Naive thymus-derived CD4-positive, alpha-beta T cell (primary cell): ENCODE measurements at regions of chr9 and their contacts with region 1.

Region 1: GRCh38 chr9:112174218-112174964 is 706 bp downstream of the SUSD1 start:
- DNase-seq: peak; percentile 42 to 80 (median 63)
- ATAC-seq: peak; percentile 87
- H3K4me3 ChIP-seq: peak overlapping the region; percentile 67
- H3K4me3 Mint-ChIP-seq: peak overlapping the region; percentile 83 to 94 (median 90)
- H3K27ac ChIP-seq: peak overlapping the region; percentile 9
- H3K27ac Mint-ChIP-seq: peak overlapping the region; percentile 65 to 95 (median 87)
- H3K4me1 ChIP-seq: peaks cover 33 to 54% of the 10 kb centered on the region in 2 donors
- H3K4me1 Mint-ChIP-seq: peaks cover 49 to 81% (median 73%) of the 10 kb centered on the region in 7 donors
- H3K27me3 ChIP-seq: no peaks in the 10 kb centered on the region
- H3K27me3 Mint-ChIP-seq: peaks cover 0 to 3% (median 0%) of the 10 kb centered on the region in 5 donors

Region 2: DNA sequence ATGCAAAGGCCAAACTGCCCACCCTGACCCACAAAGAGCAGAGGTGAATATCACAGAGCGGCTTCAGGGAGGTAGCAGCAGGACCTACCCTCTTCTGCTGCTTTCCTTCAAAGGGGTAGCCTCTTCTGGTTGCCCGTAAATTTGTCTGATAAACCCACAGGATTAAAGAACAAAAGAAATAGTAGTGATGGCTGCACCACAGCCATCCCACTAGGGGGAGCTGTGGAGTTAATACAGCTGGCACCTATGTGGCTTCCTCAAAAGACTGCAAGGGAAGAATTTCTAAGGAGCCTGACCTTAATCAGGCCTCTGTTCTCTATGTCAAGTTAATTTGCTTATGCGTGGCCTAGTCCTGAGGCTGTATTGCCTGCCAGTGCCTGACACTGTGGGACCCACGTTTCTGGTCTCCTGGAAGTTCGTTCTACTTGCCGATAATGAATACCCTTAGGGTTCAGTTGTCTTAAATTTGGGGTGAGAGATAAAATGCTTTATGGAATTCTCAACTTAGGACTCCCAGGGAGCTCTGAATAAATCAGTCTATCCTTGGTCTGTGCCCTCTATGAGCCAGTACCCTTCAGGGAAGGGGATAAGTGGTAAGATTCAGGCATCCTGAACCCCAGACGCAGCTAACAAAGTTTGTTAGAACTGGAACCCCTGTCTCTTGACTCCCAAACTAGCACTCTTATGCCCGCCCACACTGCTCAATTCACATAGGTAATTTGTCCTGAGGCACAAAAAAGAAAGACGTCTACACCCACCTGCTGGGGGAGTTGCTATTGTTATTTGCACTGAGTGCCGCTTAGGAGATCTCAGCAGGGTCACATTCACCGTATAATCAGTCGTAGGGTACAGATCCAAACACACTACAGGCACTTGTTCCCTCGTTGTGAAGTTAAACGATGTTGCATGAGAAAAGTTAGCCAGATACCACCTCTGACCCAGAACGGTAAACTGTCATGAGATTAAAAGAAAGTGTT is 76.4 kb before region 1 on chr9:
- CTCF ChIA-PET with region 1: no interaction called
- POLR2A ChIA-PET with region 1: no interaction called
- intact Hi-C with region 1: loop called (anchors 5 kb)
- DNase-seq: peak; percentile 41 to 85 (median 68)
- ATAC-seq: peak; percentile 93
- H3K4me3 ChIP-seq: no peak overlapping the region
- H3K4me3 Mint-ChIP-seq: no peak overlapping the region
- H3K27ac ChIP-seq: no peak overlapping the region
- H3K27ac Mint-ChIP-seq: peak overlapping the region in 1 of 9 donors; percentile 15
- H3K4me1 ChIP-seq: peaks cover 0 to 4% of the 10 kb centered on the region in 2 donors
- H3K4me1 Mint-ChIP-seq: peaks cover 2 to 32% (median 12%) of the 10 kb centered on the region in 7 donors
- H3K27me3 ChIP-seq: no peaks in the 10 kb centered on the region
- H3K27me3 Mint-ChIP-seq: peaks cover 0 to 3% (median 0%) of the 10 kb centered on the region in 5 donors

Region 3: DNA sequence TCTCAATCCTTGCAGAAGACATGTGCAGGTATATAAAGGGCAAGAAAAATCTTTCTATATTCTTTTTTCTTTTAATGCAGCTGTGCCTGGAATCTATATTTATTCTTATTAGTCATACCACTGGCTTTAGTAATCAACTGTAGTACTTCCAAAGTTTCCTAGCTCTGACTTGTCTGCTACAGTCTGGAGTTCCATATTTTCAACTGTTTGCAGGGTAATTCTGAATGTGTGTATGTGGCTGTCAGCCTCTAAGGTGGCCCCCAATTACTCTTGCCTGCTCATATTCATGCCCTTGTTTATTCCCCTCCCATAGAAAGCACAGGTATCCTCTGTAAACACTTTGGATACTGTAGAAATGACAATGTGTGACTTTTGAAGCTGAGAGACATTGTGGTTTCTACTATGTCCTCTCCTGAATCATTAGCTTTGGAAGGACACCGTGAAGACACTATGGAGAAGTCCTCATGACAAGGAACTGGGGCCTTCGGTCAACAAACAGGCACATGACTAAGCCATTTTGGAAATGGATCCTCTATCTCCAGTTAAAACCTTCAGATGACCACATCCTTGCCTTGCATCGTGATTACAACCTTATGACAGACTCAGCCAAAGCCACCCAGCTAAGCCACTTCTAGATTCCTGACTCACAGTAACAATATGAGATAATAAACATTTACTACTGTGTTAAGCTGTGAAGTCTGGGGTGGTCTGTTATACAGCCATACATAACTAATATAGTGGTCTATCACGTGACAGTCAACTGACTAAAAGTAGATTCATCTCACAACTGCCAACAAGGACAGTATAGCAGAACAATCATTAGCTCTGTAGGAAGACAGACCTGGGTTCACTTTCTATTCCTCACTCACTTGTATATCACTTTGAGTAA is 50.3 kb after region 1 on chr9:
- CTCF ChIA-PET with region 1: no interaction called
- POLR2A ChIA-PET with region 1: no interaction called
- intact Hi-C with region 1: loop called (anchors 1 to 5 kb)
- DNase-seq: no peak
- ATAC-seq: peak; percentile 65
- H3K4me3 ChIP-seq: no peak overlapping the region
- H3K4me3 Mint-ChIP-seq: no peak overlapping the region
- H3K27ac ChIP-seq: no peak overlapping the region
- H3K27ac Mint-ChIP-seq: peak overlapping the region in 2 of 9 donors; percentile 2 to 57
- H3K4me1 ChIP-seq: no peaks in the 10 kb centered on the region
- H3K4me1 Mint-ChIP-seq: peaks cover 4 to 22% (median 11%) of the 10 kb centered on the region in 7 donors
- H3K27me3 ChIP-seq: no peaks in the 10 kb centered on the region
- H3K27me3 Mint-ChIP-seq: no peaks in the 10 kb centered on the region